ENCODE measurements at regions of chr3 and their contacts with region 1.

Region 1: GRCh38 chr3:149657926-149658733 is at the start of gene WWTR1:
- DNase-seq: peak; percentile 93
- ATAC-seq: peak; percentile 81
- H3K4me3 ChIP-seq: peak within 1 kb of the TSS; percentile 92 to 94 (median 93)
- H3K27ac ChIP-seq: peak within 1 kb of the TSS; percentile 79
- H3K4me1 ChIP-seq: peaks cover 58% of the 10 kb centered on the region
- H3K27me3 ChIP-seq: no peaks in the 10 kb centered on the region; a peak in 1 of 5 replicates
- CTCF ChIP-seq: peak; percentile 54; the same call in 1 of the 2 replicates
- EP300 ChIP-seq: peak in 1 of 2 experiments; percentile 4; a peak in 1 of 4 replicates
- POLR2A ChIP-seq: peak; percentile 81 to 89
- RAD21 ChIP-seq: peak; percentile 78; the same call in 1 of the 2 replicates
- total RNA-seq, gene WWTR1: 19.7 and 27.0 TPM in 2 replicates

Region 2: GRCh38 chr3:149609595-149609994 is 48.5 kb before region 1 on chr3:
- CTCF ChIA-PET with region 1: no interaction called
- POLR2A ChIA-PET with region 1: interaction called, 42 read pairs
- in situ Hi-C with region 1: no loop called
- intact Hi-C with region 1: loop called (anchors 5 kb)
- DNase-seq: peak; percentile 95
- ATAC-seq: peak; percentile 85
- H3K4me3 ChIP-seq: peak overlapping the region in 1 of 3 experiments; percentile 30; a peak in 1 of 6 replicates
- H3K27ac ChIP-seq: peak overlapping the region; percentile 89
- H3K4me1 ChIP-seq: peaks cover 100% of the 10 kb centered on the region
- H3K27me3 ChIP-seq: no peaks in the 10 kb centered on the region
- CTCF ChIP-seq: no peak
- EP300 ChIP-seq: peak in 1 of 2 experiments; percentile 91; a peak in 2 of 4 replicates
- POLR2A ChIP-seq: no peak
- RAD21 ChIP-seq: no peak

Region 3: DNA sequence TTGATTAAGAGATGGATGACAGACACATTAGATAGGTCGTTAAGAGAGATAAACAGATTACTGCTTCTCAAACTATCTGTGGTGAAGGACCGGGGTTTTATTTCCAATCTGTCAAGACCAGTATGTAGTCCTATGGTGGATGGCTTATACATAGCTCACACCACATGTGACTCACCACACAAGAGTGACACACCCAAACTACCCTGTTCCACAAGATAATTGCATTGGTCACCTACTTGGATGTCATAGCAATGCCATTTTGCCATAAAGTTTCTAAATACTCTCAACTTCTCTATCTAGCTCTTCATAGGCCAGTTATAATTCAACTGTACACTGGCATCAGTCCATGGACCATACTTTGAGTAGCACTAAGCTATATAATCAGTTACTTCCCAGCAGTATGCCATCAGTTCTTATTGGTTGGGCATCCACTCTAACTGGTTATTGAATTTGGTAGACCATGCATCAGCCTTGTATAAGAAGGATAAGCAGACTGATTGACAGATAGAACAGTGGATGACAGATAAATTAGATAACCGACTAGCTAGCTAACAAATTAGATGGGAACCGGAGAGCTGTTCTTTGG is 11.9 kb before region 1 on chr3:
- CTCF ChIA-PET with region 1: no interaction called
- POLR2A ChIA-PET with region 1: interaction called, 28 read pairs
- in situ Hi-C with region 1: no loop called
- intact Hi-C with region 1: no loop called
- DNase-seq: no peak
- ATAC-seq: no peak
- H3K4me3 ChIP-seq: no peak overlapping the region
- H3K27ac ChIP-seq: no peak overlapping the region
- H3K4me1 ChIP-seq: peaks cover 95% of the 10 kb centered on the region
- H3K27me3 ChIP-seq: no peaks in the 10 kb centered on the region
- CTCF ChIP-seq: no peak
- EP300 ChIP-seq: no peak
- POLR2A ChIP-seq: no peak
- RAD21 ChIP-seq: no peak

Region 4: DNA sequence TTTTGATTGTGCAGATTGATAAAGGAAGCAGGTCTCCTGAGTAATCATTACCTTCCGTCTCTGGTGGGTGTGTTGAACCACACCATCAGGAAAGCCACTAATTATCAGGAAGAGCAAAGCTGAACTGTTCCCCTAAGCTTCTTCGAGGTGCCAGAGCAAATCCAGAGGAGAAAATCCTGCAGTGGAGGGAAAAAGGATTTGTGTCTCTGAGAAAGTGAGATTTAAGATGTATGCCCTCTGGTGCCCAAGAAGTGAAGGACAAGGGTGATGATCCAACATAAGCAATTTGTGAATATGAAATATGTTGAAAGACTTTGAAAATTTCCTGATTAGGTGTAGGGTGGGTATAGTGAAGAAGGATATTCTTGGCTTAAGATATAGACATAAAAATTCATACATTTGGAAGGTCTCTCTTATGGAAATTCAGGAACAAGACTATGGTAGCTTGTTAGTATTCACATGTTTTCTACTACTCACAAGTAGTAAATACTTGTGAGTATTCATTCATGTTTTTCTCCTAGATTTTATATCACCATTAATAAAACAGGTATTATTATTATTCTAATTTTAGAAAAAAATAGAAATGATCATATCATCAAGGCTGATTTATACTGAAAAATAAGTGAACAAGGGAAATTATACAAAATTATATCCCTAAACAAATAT is 59.4 kb after region 1 on chr3:
- CTCF ChIA-PET with region 1: no interaction called
- POLR2A ChIA-PET with region 1: interaction called, 5 read pairs
- in situ Hi-C with region 1: no loop called
- intact Hi-C with region 1: loop called (anchors 5 kb)
- DNase-seq: peak; percentile 51
- ATAC-seq: no peak
- H3K4me3 ChIP-seq: no peak overlapping the region
- H3K27ac ChIP-seq: no peak overlapping the region
- H3K4me1 ChIP-seq: peaks cover 27% of the 10 kb centered on the region
- H3K27me3 ChIP-seq: no peaks in the 10 kb centered on the region
- CTCF ChIP-seq: peak; percentile 76
- EP300 ChIP-seq: no peak
- POLR2A ChIP-seq: no peak
- RAD21 ChIP-seq: peak; percentile 52; the same call in 1 of the 2 replicates

Measured in HepG2 (cell line).